Heart left ventricle (tissue), 16 donors: ENCODE measurements at regions of chr5 and their contacts with region 1.

Region 1: GRCh38 chr5:136811551-136811950 is 446.2 kb upstream of the TRPC7 start:
- DNase-seq: peak in 1 of 5 donors; percentile 52
- ATAC-seq: peak in 2 of 4 donors; percentile 54 to 89
- H3K4me3 ChIP-seq: no peak overlapping the region
- H3K27ac ChIP-seq: peak overlapping the region in 2 of 12 donors; percentile 11 to 38
- H3K4me1 ChIP-seq: peaks cover 0 to 28% (median 16%) of the 10 kb centered on the region in 12 donors
- H3K27me3 ChIP-seq: no peaks in the 10 kb centered on the region
- CTCF ChIP-seq: no peak
- POLR2A ChIP-seq: no peak

Region 2: DNA sequence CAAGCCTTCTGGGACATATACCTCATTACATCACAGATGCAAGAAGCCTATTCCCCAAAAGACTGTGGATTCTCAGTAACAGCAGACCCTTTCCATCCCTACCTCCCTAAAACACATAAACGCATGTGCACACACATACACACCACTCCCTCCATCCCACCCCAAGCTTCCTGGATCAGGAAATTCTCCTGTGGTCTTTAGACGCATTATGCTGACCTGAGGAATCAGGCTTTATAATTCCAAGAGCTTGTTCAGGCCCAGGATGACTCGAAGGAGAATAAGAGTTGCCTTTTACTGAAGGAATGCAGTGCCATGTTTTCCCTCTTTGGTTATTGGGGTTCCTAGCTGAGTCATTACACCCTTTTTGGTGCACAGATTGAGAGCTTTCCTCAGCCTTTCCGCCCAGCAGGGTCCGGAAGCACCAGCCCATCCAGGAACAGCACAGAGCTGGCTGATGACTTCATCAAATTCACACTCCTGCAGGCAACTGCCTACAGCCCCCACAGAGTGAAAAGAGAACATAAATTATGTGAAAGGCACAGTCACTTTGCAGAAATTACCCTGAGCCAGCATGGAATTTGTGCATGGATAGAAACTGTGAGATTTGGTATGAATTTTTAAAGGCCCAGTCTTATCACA is 61.2 kb before region 1 on chr5:
- intact Hi-C with region 1: no loop called
- DNase-seq: no peak
- ATAC-seq: no peak
- H3K4me3 ChIP-seq: no peak overlapping the region
- H3K27ac ChIP-seq: no peak overlapping the region
- H3K4me1 ChIP-seq: no peaks in the 10 kb centered on the region
- H3K27me3 ChIP-seq: peaks cover 0 to under 1% (median 0%) of the 10 kb centered on the region in 9 donors
- CTCF ChIP-seq: no peak
- POLR2A ChIP-seq: no peak

Region 3: DNA sequence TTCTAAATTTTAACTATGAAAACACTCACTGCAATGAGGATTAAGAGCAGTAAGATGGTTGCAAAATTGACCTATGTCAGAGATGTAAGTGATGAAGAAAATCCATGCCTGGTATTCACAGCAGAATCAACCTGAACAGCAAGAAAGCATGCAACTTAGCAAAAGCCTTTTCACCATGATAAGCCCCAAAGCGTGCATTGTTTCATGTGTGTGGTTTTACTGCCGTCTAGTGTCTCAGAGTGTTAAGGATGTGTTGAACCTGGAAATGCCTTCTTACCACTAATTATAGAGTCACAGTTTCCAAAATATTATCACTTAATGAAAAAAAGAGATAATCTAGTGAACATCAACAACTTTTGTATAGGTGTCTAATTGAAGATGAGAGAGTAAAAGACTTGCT is 31.0 kb before region 1 on chr5:
- intact Hi-C with region 1: no loop called
- DNase-seq: no peak
- ATAC-seq: no peak
- H3K4me3 ChIP-seq: no peak overlapping the region
- H3K27ac ChIP-seq: no peak overlapping the region
- H3K4me1 ChIP-seq: no peaks in the 10 kb centered on the region
- H3K27me3 ChIP-seq: peaks cover 0 to 4% (median 0%) of the 10 kb centered on the region in 9 donors
- CTCF ChIP-seq: no peak
- POLR2A ChIP-seq: no peak

Region 4: DNA sequence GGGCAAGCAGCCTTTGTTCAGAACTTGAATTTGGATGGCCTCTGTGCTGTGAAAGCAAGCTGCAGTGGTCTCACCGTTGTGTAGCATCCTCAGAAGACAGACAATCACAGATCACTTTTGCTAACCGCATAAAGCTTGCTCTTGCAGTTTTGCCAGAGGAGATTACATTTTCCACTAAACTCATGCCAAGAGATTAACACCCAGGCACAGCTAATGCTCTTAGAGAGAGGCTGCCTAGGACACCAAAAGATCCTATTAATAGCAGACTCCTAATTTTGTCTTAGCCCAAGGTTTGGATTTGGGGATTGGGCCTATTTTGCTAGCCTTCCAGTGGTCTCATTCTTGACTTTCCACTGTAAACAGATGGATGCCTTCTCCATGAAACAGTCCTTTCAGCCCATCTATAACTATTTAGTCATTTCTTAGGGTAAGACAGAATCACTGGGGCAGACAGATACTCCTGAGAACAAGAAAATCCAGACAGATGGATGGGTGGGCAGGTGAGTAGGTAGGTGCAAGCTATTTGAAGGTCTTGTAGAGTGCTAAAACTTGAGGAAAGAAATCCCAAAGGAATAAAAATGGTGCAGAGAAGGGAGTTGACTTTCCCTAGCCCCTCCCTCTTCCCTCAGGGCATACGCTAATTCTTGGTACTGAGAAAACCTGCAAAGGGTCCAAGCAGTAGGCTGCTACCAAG is 181.4 kb after region 1 on chr5:
- intact Hi-C with region 1: loop called in 3 of 10 experiments (anchors 10 kb)
- DNase-seq: peak in 1 of 5 donors; percentile 13
- ATAC-seq: peak; percentile 89 to 94 (median 92)
- H3K4me3 ChIP-seq: peak overlapping the region in 2 of 12 donors; percentile 25 to 35
- H3K27ac ChIP-seq: peak overlapping the region; percentile 20 to 92 (median 60)
- H3K4me1 ChIP-seq: peaks cover 0 to 33% (median 9%) of the 10 kb centered on the region in 12 donors
- H3K27me3 ChIP-seq: no peaks in the 10 kb centered on the region
- CTCF ChIP-seq: no peak
- POLR2A ChIP-seq: no peak